Gastrocnemius medialis (tissue), 4 donors: ENCODE measurements at regions of chr11 and their contacts with region 1.

Region 1: GRCh38 chr11:124586238-124586860 is 16.6 kb downstream of the OR8A1 start:
- DNase-seq: peak in 1 of 2 donors; percentile 14
- ATAC-seq: no peak
- H3K4me3 ChIP-seq: no peak overlapping the region
- H3K27ac ChIP-seq: no peak overlapping the region
- H3K4me1 ChIP-seq: no peaks in the 10 kb centered on the region
- H3K27me3 ChIP-seq: no peaks in the 10 kb centered on the region
- CTCF ChIP-seq: peak in 2 of 5 experiments; percentile 44 to 51
- POLR2A ChIP-seq: no peak

Region 2: DNA sequence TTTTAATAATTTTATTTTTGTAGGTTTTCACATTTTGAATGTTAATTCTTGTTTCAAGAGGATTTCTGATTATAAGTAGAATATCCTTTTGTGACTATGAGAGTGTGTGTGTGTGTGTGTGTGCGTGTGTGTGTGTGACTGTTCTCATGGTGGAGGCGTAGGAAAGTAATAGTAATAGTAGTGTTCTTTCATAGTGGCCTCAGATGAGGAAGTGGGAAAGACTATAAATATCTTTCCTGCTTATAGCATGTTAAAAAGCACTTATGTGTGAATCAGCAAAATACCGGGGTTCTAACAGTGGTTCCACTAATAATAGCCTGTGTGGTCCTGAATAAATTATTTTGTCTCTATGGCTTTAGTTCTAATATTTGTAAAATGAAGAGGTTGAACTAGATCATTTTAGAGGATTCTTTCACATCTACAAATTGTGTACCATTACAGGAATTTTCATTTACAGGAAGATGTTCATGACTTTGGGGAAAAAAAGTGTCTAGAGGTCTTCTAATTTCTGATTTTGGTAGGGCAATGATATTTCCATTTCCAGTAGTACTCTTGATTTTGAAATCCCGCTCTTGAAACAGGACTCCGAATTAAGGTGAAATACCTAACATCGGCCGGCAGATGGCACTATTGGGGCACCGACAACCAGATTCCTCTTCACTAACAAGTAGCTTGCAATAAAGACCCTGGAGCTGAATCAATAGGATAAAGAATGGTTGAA is 515.3 kb before region 1 on chr11:
- in situ Hi-C with region 1: loop called in 3 of 4 experiments (anchors 25 kb)
- intact Hi-C with region 1: no loop called
- DNase-seq: peak; percentile 24
- ATAC-seq: peak in 1 of 2 donors; percentile 64
- H3K4me3 ChIP-seq: no peak overlapping the region
- H3K27ac ChIP-seq: no peak overlapping the region
- H3K4me1 ChIP-seq: no peaks in the 10 kb centered on the region
- H3K27me3 ChIP-seq: peaks cover 0 to 7% (median 4%) of the 10 kb centered on the region in 3 donors
- CTCF ChIP-seq: peak in 3 of 5 experiments; percentile 42 to 75 (median 66)
- POLR2A ChIP-seq: no peak

Region 3: GRCh38 chr11:124402326-124402922 is 183.9 kb before region 1 on chr11:
- in situ Hi-C with region 1: loop called in 1 of 4 experiments (anchors 25 kb)
- intact Hi-C with region 1: no loop called
- DNase-seq: peak in 1 of 2 donors; percentile 11
- ATAC-seq: no peak
- H3K4me3 ChIP-seq: no peak overlapping the region
- H3K27ac ChIP-seq: no peak overlapping the region
- H3K4me1 ChIP-seq: no peaks in the 10 kb centered on the region
- H3K27me3 ChIP-seq: no peaks in the 10 kb centered on the region
- CTCF ChIP-seq: peak in 3 of 5 experiments; percentile 22 to 47 (median 44)
- POLR2A ChIP-seq: no peak

Region 4: GRCh38 chr11:124415356-124415923 is 170.9 kb before region 1 on chr11:
- in situ Hi-C with region 1: loop called (anchors 5 to 25 kb)
- intact Hi-C with region 1: loop called (anchors 2 kb)
- DNase-seq: no peak
- ATAC-seq: no peak
- H3K4me3 ChIP-seq: no peak overlapping the region
- H3K27ac ChIP-seq: no peak overlapping the region
- H3K4me1 ChIP-seq: no peaks in the 10 kb centered on the region
- H3K27me3 ChIP-seq: no peaks in the 10 kb centered on the region
- CTCF ChIP-seq: peak in 2 of 5 experiments; percentile 43 to 44
- POLR2A ChIP-seq: no peak